ENCODE measurements at regions of chr19 and their contacts with region 1.

Region 1: GRCh38 chr19:34096020-34096915 is 76.0 kb upstream of the LSM14A start:
- DNase-seq: peak; percentile 18
- H3K4me3 ChIP-seq: no peak overlapping the region
- H3K27ac ChIP-seq: no peak overlapping the region
- H3K4me1 ChIP-seq: no peaks in the 10 kb centered on the region
- H3K27me3 ChIP-seq: no peaks in the 10 kb centered on the region
- CTCF ChIP-seq: peak; percentile 59 to 63

Region 2: DNA sequence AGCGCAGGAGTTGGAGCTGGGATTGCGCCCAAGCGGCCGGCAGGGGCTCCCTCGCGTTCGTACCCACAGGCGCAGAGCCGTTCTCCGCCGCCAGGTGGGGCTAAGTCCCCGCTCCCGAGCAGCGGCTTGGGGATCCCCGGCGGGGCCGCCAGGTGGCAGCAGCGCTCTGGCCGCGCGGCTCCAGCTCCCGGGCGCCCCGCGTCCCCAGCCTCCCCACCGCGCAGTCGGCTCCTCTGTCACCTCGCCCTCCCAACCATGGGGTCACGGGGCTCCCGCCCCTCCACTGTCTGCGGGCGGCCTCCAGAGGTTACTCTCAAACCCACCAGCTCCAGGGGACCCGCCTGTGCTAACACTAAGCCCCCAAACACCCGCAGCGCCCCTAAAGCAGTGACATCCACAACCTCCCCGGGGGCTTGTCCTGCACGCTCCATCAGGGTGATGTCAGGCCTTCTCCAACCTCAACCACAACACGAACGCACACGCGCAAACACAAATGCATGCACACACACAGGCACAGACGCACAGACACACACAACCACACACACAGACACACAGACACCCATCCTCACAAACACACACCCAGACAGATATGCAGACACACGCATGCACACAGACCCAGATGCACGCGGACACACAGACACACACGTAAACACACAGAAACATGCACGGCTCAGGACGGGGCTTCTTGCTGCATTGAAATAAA is 318.0 kb before region 1 on chr19:
- CTCF ChIA-PET with region 1: interaction called, 7 read pairs
- dilution Hi-C with region 1: no loop called
- in situ Hi-C with region 1: loop called (anchors 5 kb)
- intact Hi-C with region 1: loop called (anchors 1 kb)
- DNase-seq: peak; percentile 52
- H3K4me3 ChIP-seq: peak overlapping the region in 1 of 3 experiments; percentile 14
- H3K27ac ChIP-seq: no peak overlapping the region
- H3K4me1 ChIP-seq: peaks cover 10% of the 10 kb centered on the region
- H3K27me3 ChIP-seq: no peaks in the 10 kb centered on the region
- CTCF ChIP-seq: peak; percentile 99 to 100

Region 3: GRCh38 chr19:34041925-34042521 is 54.2 kb before region 1 on chr19:
- CTCF ChIA-PET with region 1: interaction called, 9 read pairs
- dilution Hi-C with region 1: no loop called
- in situ Hi-C with region 1: no loop called
- intact Hi-C with region 1: loop called (anchors 5 kb)
- DNase-seq: peak; percentile 20
- H3K4me3 ChIP-seq: no peak overlapping the region
- H3K27ac ChIP-seq: no peak overlapping the region
- H3K4me1 ChIP-seq: no peaks in the 10 kb centered on the region
- H3K27me3 ChIP-seq: no peaks in the 10 kb centered on the region
- CTCF ChIP-seq: peak; percentile 83 to 86

Region 4: GRCh38 chr19:34508540-34508939 is 412.3 kb after region 1 on chr19:
- CTCF ChIA-PET with region 1: no interaction called
- dilution Hi-C with region 1: no loop called
- in situ Hi-C with region 1: no loop called
- intact Hi-C with region 1: no loop called
- DNase-seq: no peak
- H3K4me3 ChIP-seq: no peak overlapping the region
- H3K27ac ChIP-seq: no peak overlapping the region
- H3K4me1 ChIP-seq: no peaks in the 10 kb centered on the region
- H3K27me3 ChIP-seq: no peaks in the 10 kb centered on the region
- CTCF ChIP-seq: no peak

Measured in mammary epithelial cell (primary cell).